Calu3 (cell line): ENCODE measurements at regions of chr14 and their contacts with region 1.

Region 1: DNA sequence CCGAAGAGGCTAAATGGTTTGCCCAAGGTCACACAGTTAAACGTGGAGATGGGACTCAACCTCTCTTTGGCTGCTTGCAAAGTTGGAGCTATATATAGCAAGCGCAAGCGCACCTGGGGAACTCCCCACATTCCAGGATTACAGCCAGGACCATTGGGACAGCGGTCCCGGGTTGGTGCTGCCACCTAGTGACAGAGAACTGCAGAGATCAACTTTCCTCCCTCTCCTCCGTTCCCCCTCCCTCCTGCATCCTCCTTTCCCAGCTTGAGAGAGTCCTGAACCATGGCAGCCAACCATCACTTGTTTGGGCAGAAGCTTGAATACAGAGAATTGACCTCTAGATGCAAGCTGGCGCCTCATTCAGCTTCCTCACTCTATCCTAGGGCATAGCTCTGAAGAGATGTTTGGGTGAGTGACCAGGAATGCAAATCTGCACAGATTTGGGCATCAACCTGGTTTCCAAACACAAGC is 17.4 kb upstream of the FLVCR2 start:
- DNase-seq: peak; percentile 89
- H3K4me3 Mint-ChIP-seq: no peak overlapping the region
- H3K27ac Mint-ChIP-seq: no peak overlapping the region
- H3K4me1 Mint-ChIP-seq: peaks cover 27% of the 10 kb centered on the region
- H3K27me3 Mint-ChIP-seq: peaks cover 13% of the 10 kb centered on the region
- CTCF ChIP-seq: peak; percentile 70

Region 2: GRCh38 chr14:75132382-75133086 is 428.5 kb before region 1 on chr14:
- CTCF ChIA-PET with region 1: no interaction called
- intact Hi-C with region 1: loop called (anchors 10 kb)
- DNase-seq: peak; percentile 65
- H3K4me3 Mint-ChIP-seq: no peak overlapping the region
- H3K27ac Mint-ChIP-seq: peak overlapping the region; percentile 72
- H3K4me1 Mint-ChIP-seq: peaks cover 16% of the 10 kb centered on the region
- H3K27me3 Mint-ChIP-seq: no peaks in the 10 kb centered on the region
- CTCF ChIP-seq: peak; percentile 56

Region 3: GRCh38 chr14:75487155-75487671 is 73.8 kb before region 1 on chr14:
- CTCF ChIA-PET with region 1: interaction called, 10 read pairs
- intact Hi-C with region 1: loop called (anchors 1 kb)
- DNase-seq: peak; percentile 17
- H3K4me3 Mint-ChIP-seq: no peak overlapping the region
- H3K27ac Mint-ChIP-seq: no peak overlapping the region
- H3K4me1 Mint-ChIP-seq: peaks cover 24% of the 10 kb centered on the region
- H3K27me3 Mint-ChIP-seq: no peaks in the 10 kb centered on the region
- CTCF ChIP-seq: no peak

Region 4: GRCh38 chr14:75518625-75519024 is 42.4 kb before region 1 on chr14:
- CTCF ChIA-PET with region 1: interaction called, 4 read pairs
- intact Hi-C with region 1: loop called (anchors 1 kb)
- DNase-seq: no peak
- H3K4me3 Mint-ChIP-seq: no peak overlapping the region
- H3K27ac Mint-ChIP-seq: no peak overlapping the region
- H3K4me1 Mint-ChIP-seq: peaks cover 29% of the 10 kb centered on the region
- H3K27me3 Mint-ChIP-seq: peaks cover 41% of the 10 kb centered on the region
- CTCF ChIP-seq: no peak